Motor neuron (in vitro differentiated cells): ENCODE measurements at regions of chr17 and their contacts with region 1.

Region 1: GRCh38 chr17:30093463-30094147 is 23.0 kb upstream of the NSRP1 start:
- ATAC-seq: peak; percentile 61 to 90 (median 78)
- H3K4me3 ChIP-seq: no peak overlapping the region
- H3K27ac ChIP-seq: no peak overlapping the region
- H3K4me1 ChIP-seq: no peaks in the 10 kb centered on the region

Region 2: GRCh38 chr17:29617125-29617480 is 476.5 kb before region 1 on chr17:
- in situ Hi-C with region 1: loop called in 1 of 9 experiments (anchors 25 kb)
- ATAC-seq: peak in 6 of 8 experiments; percentile 0 to 47 (median 29)
- H3K4me3 ChIP-seq: no peak overlapping the region
- H3K27ac ChIP-seq: no peak overlapping the region
- H3K4me1 ChIP-seq: peaks cover 28 to 34% of the 10 kb centered on the region in 2 donors

Region 3: DNA sequence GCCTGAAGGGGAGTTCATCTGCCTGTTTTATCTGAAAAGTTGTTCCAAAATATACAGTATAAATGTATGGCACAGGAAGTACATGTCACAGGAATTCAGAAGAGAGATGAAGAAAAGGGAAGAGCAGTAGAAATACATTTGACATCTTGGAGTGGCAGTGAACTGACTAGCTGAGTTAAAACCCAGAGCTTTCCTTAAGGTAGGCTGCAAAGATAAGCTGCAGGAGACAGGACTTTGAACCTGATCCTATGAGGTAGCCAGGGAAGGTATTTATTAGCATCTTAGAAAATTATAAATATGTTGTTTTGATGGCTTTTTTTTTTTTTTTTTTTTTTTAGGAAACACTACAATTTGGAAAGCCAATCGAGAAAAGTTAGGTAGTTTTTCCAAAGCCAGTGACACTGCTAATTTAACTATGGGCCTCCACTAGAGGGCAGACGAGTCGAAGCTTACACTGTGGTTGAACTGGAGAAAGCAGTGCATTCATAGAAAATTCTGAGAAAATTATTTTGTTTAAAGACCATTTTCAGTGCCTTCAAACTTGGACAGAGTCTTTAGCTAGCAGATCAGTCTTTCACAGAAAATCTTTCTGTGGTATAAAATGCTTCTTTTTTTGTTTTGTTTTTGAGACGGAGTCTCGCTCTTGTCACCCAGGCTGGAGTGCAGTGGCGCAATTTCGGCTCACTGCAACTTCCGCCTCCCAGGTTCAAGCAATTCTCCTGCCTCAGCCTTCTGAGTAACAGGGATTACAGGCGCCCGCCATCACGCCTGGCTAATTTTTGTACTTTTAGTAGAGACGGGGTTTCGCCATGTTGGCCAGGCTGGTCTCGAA is 285.9 kb before region 1 on chr17:
- in situ Hi-C with region 1: loop called in 1 of 9 experiments (anchors 25 kb)
- ATAC-seq: peak in 7 of 8 experiments; percentile 46 to 86 (median 72)
- H3K4me3 ChIP-seq: no peak overlapping the region
- H3K27ac ChIP-seq: no peak overlapping the region
- H3K4me1 ChIP-seq: no peaks in the 10 kb centered on the region

Region 4: GRCh38 chr17:30031214-30031869 is 62.3 kb before region 1 on chr17:
- in situ Hi-C with region 1: loop called in 1 of 9 experiments (anchors 10 kb)
- ATAC-seq: no peak
- H3K4me3 ChIP-seq: no peak overlapping the region
- H3K27ac ChIP-seq: no peak overlapping the region
- H3K4me1 ChIP-seq: no peaks in the 10 kb centered on the region

Region 5: GRCh38 chr17:30160419-30161172 is 67.0 kb after region 1 on chr17:
- in situ Hi-C with region 1: no loop called
- ATAC-seq: no peak
- H3K4me3 ChIP-seq: no peak overlapping the region
- H3K27ac ChIP-seq: no peak overlapping the region
- H3K4me1 ChIP-seq: no peaks in the 10 kb centered on the region

Region 6: DNA sequence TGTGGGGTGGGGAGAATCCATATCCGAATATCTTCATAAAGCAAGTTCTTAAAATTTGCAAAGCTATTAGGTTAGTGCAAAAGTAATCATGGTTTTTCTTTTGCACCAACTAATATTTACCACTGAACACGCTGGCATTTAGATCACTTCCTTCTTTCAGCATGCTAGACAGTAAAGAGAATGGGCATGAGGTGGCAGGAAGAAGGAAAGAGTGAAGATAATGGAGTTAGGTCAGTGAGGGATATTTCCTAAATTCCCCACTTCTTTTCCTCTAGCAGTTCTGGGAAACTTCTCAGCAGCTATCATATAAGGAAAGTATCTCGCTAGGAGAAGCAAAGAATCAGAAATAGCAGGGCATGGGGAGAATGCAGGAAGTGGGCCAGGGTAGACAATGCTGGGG is 102.9 kb after region 1 on chr17:
- in situ Hi-C with region 1: no loop called
- ATAC-seq: no peak
- H3K4me3 ChIP-seq: no peak overlapping the region
- H3K27ac ChIP-seq: no peak overlapping the region
- H3K4me1 ChIP-seq: no peaks in the 10 kb centered on the region